WTC11 (cell line): ENCODE measurements at regions of chr9 and their contacts with region 1.

Region 1: DNA sequence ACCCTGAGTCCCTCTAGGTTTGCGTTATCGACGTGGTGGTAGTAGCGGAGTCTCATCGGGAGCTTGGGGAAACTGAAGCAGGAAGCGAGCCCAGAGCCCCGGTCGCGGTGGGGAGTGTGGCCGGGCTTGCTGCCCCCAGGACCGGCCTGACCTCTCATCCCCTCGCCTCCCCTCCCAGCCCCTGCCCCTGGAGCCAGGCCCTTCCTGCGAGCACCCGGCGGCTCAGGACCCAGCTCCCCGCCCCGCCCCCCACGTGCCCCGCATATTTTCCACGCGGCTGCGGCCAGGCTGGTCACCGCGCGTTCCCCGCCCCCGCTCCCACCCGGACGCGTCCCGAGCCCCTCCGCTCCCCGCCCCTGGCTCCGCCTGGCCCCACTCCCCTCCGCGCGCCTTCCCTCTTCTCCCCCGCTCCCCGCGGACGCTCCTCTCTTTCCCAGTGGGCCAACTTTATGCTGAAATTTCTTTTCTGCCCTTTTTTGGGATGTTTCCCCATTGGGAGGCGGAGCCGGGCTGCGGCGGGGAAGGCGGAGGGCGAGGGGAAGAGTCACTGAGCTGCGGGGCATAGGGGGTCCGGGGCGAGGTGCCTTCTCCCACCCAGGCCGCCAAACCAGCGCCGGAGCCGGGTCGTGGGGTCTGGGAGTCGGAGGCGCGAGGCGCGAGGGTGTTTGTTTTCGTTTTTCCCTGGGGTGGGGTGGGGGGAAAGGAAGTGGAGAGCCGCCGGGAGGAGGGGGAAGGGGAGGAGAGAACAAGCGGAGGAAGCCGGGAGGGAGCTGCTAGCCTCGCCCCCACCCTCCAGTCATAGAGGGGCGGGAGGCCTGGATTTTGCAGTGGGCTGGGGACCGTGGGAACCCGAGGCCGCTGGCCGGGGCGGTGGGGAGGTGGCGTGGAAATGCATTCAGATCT is 957 bp upstream of the TPM2 start:
- DNase-seq: peak; percentile 64
- ATAC-seq: peak; percentile 40
- H3K4me3 Mint-ChIP-seq: peak overlapping the region; percentile 91
- H3K27ac Mint-ChIP-seq: no peak overlapping the region
- H3K4me1 Mint-ChIP-seq: peaks cover 23% of the 10 kb centered on the region
- H3K27me3 Mint-ChIP-seq: no peaks in the 10 kb centered on the region
- CTCF ChIP-seq: no peak

Region 2: GRCh38 chr9:35603987-35604577 is 86.6 kb before region 1 on chr9:
- CTCF ChIA-PET with region 1: interaction called, 22 read pairs
- POLR2A ChIA-PET with region 1: no interaction called
- DNase-seq: peak; percentile 99
- ATAC-seq: peak; percentile 89
- H3K4me3 Mint-ChIP-seq: peak overlapping the region; percentile 99
- H3K27ac Mint-ChIP-seq: peak overlapping the region; percentile 100
- H3K4me1 Mint-ChIP-seq: peaks cover 25% of the 10 kb centered on the region
- H3K27me3 Mint-ChIP-seq: peaks cover 5% of the 10 kb centered on the region
- CTCF ChIP-seq: peak; percentile 83

Region 3: DNA sequence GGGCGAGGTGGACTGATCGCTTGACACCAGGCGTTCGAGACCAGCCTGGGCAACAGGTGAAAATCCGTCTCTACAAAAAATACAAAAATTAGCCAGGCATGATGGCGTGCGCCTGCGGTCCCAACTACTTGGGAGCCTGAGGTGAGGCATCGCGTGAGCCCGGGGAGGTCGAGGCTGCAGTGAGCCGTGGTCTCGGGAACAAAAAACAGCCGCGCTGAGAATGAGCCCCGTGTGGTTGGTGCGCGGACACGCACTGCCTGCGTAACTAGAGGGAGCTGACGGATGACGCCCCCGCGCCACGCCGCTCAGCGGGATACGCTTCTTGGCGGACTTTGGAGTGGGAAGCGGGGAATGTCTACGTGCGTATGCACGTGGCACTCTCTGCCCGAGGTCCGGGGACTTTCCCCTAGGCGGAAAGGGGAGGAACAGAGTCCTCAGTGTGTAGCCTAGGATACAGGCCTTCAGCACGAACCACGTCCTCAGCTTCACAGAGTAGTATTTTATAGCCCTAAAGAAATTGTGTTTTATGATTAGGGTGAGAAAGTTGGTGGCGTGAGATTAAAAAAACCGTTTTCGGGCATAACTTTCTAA is 33.0 kb before region 1 on chr9 and contains the start of gene RMRP:
- CTCF ChIA-PET with region 1: interaction called, 127 read pairs
- POLR2A ChIA-PET with region 1: interaction called, 38 read pairs
- DNase-seq: peak; percentile 96
- ATAC-seq: peak; percentile 90
- H3K4me3 Mint-ChIP-seq: peak within 1 kb of the TSS; percentile 85
- H3K27ac Mint-ChIP-seq: peak within 1 kb of the TSS; percentile 100
- H3K4me1 Mint-ChIP-seq: peaks cover 20% of the 10 kb centered on the region
- H3K27me3 Mint-ChIP-seq: peaks cover 23% of the 10 kb centered on the region
- CTCF ChIP-seq: no peak
- total RNA-seq, gene RMRP: 23,577 to 25,958 TPM (median 25,042 TPM) in 3 replicates

Region 4: DNA sequence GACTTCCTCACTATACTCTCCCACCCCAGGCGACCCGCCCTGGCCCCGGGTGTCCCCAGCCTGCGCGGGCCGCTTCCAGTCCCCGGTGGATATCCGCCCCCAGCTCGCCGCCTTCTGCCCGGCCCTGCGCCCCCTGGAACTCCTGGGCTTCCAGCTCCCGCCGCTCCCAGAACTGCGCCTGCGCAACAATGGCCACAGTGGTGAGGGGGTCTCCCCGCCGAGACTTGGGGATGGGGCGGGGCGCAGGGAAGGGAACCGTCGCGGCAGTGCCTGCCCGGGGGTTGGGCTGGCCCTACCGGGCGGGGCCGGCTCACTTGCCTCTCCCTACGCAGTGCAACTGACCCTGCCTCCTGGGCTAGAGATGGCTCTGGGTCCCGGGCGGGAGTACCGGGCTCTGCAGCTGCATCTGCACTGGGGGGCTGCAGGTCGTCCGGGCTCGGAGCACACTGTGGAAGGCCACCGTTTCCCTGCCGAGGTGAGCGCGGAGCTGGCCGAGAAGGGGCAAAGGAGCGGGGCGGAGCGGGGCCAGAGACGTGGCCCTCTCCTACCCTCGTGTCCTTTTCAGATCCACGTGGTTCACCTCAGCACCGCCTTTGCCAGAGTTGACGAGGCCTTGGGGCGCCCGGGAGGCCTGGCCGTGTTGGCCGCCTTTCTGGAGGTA is 14.8 kb before region 1 on chr9:
- CTCF ChIA-PET with region 1: interaction called, 24 read pairs
- POLR2A ChIA-PET with region 1: interaction called, 21 read pairs
- DNase-seq: peak; percentile 95
- ATAC-seq: peak; percentile 92
- H3K4me3 Mint-ChIP-seq: peak overlapping the region; percentile 69
- H3K27ac Mint-ChIP-seq: no peak overlapping the region
- H3K4me1 Mint-ChIP-seq: peaks cover 15% of the 10 kb centered on the region
- H3K27me3 Mint-ChIP-seq: peaks cover 30% of the 10 kb centered on the region
- CTCF ChIP-seq: no peak

Region 5: GRCh38 chr9:35756275-35757225 is 65.9 kb after region 1 on chr9:
- CTCF ChIA-PET with region 1: interaction called, 12 read pairs
- POLR2A ChIA-PET with region 1: interaction called, 5 read pairs
- DNase-seq: peak; percentile 82
- ATAC-seq: peak; percentile 79
- H3K4me3 Mint-ChIP-seq: peak overlapping the region; percentile 89
- H3K27ac Mint-ChIP-seq: peak overlapping the region; percentile 93
- H3K4me1 Mint-ChIP-seq: peaks cover 26% of the 10 kb centered on the region
- H3K27me3 Mint-ChIP-seq: no peaks in the 10 kb centered on the region
- CTCF ChIP-seq: 0 out of 2 replicates have a peak, but pooled peaks have one; percentile 18